G401 (cell line): ENCODE measurements at regions of chr14 and their contacts with region 1.

Region 1: DNA sequence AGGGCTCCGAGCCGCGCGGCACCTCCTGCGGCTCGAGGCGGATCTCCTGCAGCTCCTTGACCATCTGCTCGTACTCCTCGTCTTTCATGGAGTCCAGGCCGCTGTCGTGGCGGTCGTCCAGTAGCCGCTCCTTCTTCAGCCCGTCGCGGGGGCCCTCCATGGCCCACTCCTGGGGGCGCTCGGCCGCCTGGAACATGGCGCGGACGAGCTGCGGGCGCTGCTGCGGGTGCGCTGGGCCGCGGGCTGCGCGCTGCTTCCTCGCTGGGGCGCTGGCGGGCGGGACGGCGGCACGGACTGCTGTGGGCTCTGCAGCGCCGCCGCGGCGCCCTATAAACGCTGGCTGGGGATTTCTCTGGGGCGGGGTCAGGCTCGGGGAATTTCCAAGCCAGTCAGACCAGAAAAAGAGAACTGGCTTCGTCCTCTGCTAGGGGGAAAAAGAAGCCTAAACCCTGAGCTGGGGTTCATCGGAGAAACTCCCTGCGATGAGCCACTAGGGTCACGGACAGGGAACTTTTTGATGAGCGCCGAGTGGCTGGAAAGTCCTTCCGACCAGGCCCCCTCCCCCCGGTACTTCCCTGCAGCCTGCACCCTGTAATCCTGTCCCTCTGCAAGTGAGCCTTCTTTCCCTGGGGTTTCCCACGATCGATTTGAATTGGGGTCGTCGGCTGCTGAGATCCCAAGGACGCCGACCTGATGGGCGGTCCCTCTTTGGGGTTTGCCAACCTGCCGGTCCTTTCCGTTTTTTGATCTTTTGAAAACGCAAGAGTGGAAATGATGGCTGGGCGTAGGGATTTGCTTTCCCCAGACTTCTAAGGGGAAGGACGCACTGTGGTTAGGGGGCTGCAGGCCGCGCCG is at the start of gene NFKBIA:
- DNase-seq: peak; percentile 84
- total RNA-seq, gene NFKBIA: 98.1 and 101 TPM in 2 replicates

Region 2: GRCh38 chr14:35046048-35046741 is 358.5 kb before region 1 on chr14 and contains the start of gene FAM177A1:
- in situ Hi-C with region 1: loop called (anchors 25 kb)
- DNase-seq: peak; percentile 97
- total RNA-seq, gene FAM177A1: 42.2 and 55.9 TPM in 2 replicates

Region 3: GRCh38 chr14:35229495-35230089 is 175.1 kb before region 1 on chr14:
- in situ Hi-C with region 1: loop called (anchors 10 kb)
- DNase-seq: no peak

Region 4: DNA sequence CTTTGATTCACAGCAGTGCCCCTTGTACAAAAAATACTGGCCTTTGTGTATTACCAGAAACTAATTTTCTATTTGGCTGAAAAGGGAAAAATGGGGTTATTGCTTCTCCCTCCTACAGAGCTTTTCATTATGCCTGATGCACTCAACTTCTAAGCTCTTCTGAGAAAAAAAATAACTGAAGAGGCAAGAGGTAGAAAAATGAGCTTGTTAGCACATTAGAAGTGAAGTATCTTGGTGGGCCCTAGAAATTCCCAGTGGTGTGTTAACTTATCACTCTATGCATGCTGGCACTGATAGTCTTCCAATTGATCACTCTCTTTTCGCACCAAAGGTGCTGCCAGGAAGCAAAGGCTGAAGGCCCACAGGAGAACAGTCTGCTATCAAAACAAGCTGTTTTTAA is 146.4 kb after region 1 on chr14:
- in situ Hi-C with region 1: no loop called
- DNase-seq: no peak